HAP-1 (cell line): ENCODE measurements at regions of chr2 and their contacts with region 1.

Region 1: DNA sequence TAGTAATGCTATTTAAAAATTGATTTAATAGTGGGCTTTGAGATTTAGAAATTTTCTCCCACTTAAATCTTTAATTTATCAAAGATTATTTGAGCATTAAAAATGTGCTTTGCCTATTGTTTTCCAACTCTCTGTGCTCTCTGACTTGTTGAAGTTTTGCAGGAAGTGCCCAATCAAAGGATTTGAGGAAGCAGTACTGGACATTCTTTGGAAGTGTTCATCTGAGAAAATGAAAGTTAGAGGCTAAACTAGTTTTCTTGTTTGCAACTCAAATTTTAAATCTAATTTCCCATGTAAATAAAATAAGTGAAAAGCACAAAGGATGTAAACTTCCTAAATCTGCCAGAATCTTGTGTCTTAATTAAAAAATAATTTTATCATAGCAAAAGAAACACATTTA is 89.1 kb downstream of the CAMKMT start:
- DNase-seq: no peak
- H3K4me3 ChIP-seq: no peak overlapping the region
- H3K4me1 ChIP-seq: no peaks in the 10 kb centered on the region
- H3K27me3 ChIP-seq: no peaks in the 10 kb centered on the region

Region 2: GRCh38 chr2:44044281-44044720 is 406.5 kb before region 1 on chr2:
- in situ Hi-C with region 1: loop called (anchors 25 kb)
- DNase-seq: peak; percentile 80 to 93
- H3K4me3 ChIP-seq: no peak overlapping the region
- H3K4me1 ChIP-seq: peaks cover 4% of the 10 kb centered on the region
- H3K27me3 ChIP-seq: no peaks in the 10 kb centered on the region